ENCODE measurements at regions of chr2 and their contacts with region 1.

Region 1: DNA sequence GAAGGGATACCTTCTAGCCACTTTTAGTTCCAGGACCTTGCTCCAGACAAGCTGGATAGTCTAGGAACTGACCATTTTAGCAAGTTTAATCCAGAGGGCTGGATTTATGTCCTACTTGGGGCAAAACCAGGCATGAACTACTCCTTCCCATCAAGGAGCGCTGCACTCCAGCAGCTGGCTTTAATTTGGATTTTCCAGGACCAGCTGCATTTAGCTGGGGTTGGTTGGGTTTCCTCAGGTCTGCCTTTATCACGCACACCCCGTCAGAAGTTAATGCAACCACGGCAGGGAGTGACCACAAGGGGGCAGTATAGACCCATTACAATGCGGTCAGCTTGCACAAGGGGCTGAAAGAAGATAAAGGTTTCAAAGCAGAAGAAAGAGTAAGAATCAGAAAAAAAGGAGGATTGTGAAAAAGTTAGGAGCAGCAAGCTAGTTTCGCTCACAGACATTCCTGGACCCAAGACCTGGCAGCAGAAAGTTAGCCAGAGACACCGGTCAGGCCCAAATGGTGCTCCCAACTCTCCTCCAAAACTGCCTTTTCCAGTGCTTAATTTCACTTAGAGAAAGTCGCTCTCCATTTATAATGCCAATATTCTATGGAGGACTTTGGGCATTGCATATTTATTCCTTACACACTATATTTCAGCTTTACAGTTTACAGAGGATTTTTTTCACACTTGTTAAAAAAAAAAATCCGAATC is 40.1 kb downstream of the SLC4A1AP start:
- DNase-seq: peak; percentile 75
- CTCF ChIP-seq: peak; percentile 87

Region 2: GRCh38 chr2:27715318-27716210 is 11.8 kb after region 1 on chr2:
- CTCF ChIA-PET with region 1: interaction called, 36 read pairs
- POLR2A ChIA-PET with region 1: no interaction called
- DNase-seq: peak; percentile 72
- CTCF ChIP-seq: no peak

Region 3: GRCh38 chr2:27723372-27724144 is 19.8 kb after region 1 on chr2:
- CTCF ChIA-PET with region 1: interaction called, 24 read pairs
- POLR2A ChIA-PET with region 1: no interaction called
- DNase-seq: peak; percentile 56
- CTCF ChIP-seq: peak; percentile 53

Region 4: DNA sequence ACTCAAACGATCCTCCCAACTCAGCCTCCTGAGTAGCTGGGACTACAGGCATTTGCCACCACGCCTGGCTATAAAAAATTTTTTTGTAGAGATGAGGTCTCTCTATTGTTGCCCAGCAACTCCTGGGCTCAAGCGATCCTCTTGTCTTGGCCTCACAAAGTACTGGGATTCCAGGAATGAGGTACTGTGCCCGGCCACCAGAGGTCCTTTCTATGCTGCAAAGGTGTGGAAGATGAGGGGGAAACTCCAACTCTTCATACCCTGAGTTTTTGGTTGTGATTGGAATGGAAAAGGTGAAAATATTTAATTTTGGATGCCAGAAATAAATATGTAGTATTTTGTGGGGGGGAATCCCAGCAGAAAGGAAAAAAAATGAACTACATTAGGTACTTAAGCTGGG is 103.7 kb after region 1 on chr2:
- CTCF ChIA-PET with region 1: no interaction called
- POLR2A ChIA-PET with region 1: no interaction called
- DNase-seq: no peak
- CTCF ChIP-seq: peak; percentile 35

Region 5: GRCh38 chr2:28452534-28453081 is 748.8 kb after region 1 on chr2:
- CTCF ChIA-PET with region 1: interaction called, 17 read pairs
- POLR2A ChIA-PET with region 1: no interaction called
- DNase-seq: peak; percentile 79
- CTCF ChIP-seq: peak; percentile 94

Measured in GM10248 (cell line).